ENCODE measurements at regions of chr14 and their contacts with region 1.

Region 1: DNA sequence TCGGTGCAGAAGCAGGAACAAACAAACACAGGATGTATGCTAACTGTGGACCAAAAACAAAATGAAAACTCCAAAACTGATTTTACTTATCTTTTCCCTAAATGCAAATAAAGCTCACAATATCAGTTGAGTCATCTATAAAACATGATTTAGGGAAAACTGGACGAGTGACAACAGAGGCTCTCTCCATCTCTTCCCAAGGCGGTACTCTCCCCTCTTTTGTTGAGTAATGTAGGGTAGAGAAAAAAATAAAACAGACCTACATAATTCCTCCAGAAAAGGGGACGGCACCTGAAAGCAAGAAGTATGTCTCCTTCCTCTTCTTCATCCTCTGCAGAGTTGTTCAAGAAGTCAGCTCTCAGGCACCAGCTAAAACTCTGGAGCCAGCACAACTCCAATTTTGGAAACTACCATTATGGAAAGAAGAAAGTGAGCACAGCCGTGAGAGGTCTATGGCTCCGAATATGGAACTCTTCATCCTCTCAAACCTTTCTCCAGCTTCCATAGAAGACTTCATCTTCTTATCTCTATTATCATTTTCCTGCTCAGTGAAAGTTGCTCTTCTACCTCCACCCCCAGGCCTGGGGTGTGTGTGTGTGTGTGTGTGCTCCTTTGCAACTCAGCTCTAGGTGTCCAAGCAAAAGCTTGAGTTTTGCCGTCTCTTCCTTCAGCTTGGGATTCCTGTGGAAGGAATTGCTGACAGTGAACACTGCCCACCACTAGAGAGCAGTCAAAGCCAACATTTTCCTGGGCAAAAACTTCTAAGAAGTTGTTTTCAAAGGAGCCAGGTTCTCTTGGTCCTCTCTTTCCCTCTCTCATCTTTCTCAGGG is 155.4 kb downstream of the DIO2 start:
- DNase-seq: peak; percentile 50
- H3K4me3 ChIP-seq: no peak overlapping the region
- H3K27ac ChIP-seq: no peak overlapping the region
- H3K27me3 ChIP-seq: no peaks in the 10 kb centered on the region
- CTCF ChIP-seq: peak; percentile 89

Region 2: DNA sequence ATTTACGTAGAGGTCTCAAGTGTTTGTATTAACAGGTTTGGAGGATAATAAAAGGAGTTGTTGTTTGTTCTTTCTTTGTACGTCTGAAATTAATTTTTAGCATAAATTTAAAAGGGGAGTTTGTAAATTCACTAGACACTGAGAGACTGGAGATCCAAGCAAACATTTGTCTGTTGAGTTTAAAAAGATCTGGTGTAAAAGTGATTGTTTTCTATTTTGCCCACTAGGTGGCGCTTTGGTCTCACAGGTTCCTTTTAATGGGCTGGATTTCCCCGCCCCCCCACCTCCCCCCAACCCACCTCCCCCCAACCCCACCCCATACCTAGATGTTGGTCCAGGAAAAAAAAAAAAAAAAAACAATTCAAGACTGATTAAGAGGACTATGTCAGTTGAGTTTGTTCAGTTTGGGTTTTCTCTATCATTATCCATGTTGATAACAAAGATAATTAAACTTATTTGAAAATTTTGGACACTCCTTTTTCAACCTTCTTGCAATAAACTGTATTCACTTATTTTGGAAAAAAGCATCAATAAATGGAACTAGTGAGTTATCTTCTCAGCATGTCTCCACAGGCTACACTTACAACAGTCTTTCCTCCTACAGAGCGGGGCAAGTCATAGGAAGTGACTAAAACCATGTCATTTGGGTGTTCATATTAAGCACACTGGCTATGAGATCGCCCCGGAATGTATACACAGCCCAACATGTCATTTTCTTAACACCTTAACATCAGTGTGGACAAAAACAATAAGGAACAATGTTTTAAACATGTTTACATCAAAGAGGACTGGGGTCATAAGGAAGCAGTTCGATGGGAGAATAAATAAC is 1044.6 kb before region 1 on chr14:
- CTCF ChIA-PET with region 1: interaction called, 10 read pairs
- POLR2A ChIA-PET with region 1: no interaction called
- DNase-seq: peak; percentile 15
- H3K4me3 ChIP-seq: no peak overlapping the region
- H3K27ac ChIP-seq: peak overlapping the region; percentile 25
- H3K27me3 ChIP-seq: no peaks in the 10 kb centered on the region
- CTCF ChIP-seq: peak; percentile 42

Region 3: DNA sequence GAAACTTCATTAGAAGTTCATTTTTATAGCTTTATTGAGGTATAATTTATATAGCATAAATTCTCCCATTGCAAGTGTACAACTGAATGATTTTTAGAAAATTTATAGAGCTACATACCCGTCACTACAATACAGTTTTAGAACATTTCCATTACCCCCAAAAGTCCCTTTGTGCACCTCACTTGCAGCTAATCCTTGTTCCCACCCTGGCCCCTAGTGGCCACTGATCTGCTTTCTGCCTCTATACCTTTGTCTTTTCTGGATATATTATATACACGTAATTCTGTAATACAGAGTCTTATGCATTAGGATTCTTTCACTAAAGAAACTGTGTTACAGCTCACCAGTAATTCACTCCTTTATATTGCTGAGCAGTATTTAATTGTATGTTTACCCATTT is 300.5 kb after region 1 on chr14:
- CTCF ChIA-PET with region 1: interaction called, 13 read pairs
- POLR2A ChIA-PET with region 1: no interaction called
- DNase-seq: peak; percentile 3
- H3K4me3 ChIP-seq: no peak overlapping the region
- H3K27ac ChIP-seq: no peak overlapping the region
- H3K27me3 ChIP-seq: no peaks in the 10 kb centered on the region
- CTCF ChIP-seq: peak; percentile 57

Region 4: DNA sequence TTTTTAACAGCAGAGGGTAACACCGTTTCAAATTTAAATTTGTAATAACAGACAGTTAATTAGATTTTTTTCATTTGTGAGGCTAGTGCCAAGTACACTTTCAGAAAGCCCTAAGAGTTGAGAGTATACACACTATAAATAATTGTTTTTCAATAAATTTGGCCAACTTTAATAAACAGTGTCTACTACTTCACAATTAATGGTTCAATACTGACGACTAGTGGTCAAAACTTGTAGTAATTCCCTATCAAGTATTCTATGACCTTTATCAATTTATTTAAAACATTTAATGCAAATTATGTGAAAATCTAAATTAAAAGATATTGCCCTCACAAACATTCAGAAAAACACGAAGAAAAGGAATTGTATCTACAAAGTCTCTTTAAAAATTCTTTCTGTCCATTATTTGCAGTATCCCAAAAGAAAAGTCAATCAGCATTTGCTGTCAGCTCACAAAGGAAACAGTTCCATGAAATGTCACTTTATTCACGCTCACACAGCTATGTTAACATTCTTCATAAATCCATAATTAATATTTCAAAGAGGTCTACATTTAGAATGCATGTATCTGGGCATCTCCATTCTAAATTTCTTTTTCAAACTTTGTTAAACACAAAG is 794.4 kb after region 1 on chr14:
- CTCF ChIA-PET with region 1: interaction called, 67 read pairs
- POLR2A ChIA-PET with region 1: no interaction called
- DNase-seq: peak; percentile 20
- H3K4me3 ChIP-seq: no peak overlapping the region
- H3K27ac ChIP-seq: no peak overlapping the region
- H3K27me3 ChIP-seq: no peaks in the 10 kb centered on the region
- CTCF ChIP-seq: peak; percentile 55

Region 5: DNA sequence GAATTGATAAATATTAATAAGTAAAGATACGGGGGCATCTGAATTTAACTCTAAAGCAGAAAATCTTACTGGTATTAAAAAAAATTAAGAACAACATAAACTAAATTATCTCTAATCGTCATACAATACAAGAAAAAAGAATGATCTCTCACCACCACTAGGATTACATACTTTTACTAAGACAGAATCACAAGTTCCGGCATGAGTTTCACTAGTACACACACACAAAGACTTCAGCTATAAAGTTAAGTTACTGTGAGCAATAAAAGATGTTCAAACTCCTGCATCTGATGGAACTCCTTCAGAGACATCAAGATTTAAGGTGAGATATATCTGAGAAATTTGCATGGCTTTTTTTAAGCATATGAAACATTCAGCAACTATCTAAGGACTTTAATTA is 863.7 kb after region 1 on chr14:
- CTCF ChIA-PET with region 1: no interaction called
- POLR2A ChIA-PET with region 1: no interaction called
- DNase-seq: no peak
- H3K4me3 ChIP-seq: no peak overlapping the region
- H3K27ac ChIP-seq: no peak overlapping the region
- H3K27me3 ChIP-seq: no peaks in the 10 kb centered on the region
- CTCF ChIP-seq: no peak